Astrocyte of the cerebellum (primary cell): ENCODE measurements at regions of chr12 and their contacts with region 1.

Region 1: GRCh38 chr12:94710933-94711332 is 60.6 kb upstream of the TMCC3 start:
- DNase-seq: no peak
- H3K4me3 ChIP-seq: no peak overlapping the region
- CTCF ChIP-seq: peak; percentile 11

Region 2: GRCh38 chr12:94621664-94622359 is 89.1 kb before region 1 on chr12:
- in situ Hi-C with region 1: loop called (anchors 5 kb)
- DNase-seq: no peak
- H3K4me3 ChIP-seq: no peak overlapping the region
- CTCF ChIP-seq: no peak